ENCODE measurements at regions of chr14 and their contacts with region 1.

Region 1: GRCh38 chr14:94411638-94412037 is 23.2 kb upstream of the SERPINA1 start:
- DNase-seq: no peak
- H3K4me3 ChIP-seq: no peak overlapping the region
- H3K4me3 Mint-ChIP-seq: no peak overlapping the region
- H3K27ac Mint-ChIP-seq: no peak overlapping the region
- H3K4me1 ChIP-seq: peaks cover 9% of the 10 kb centered on the region; the same call in 1 of the 2 replicates
- H3K4me1 Mint-ChIP-seq: peaks cover 12% of the 10 kb centered on the region
- H3K27me3 ChIP-seq: no peaks in the 10 kb centered on the region
- H3K27me3 Mint-ChIP-seq: no peaks in the 10 kb centered on the region
- CTCF ChIP-seq: no peak

Region 2: DNA sequence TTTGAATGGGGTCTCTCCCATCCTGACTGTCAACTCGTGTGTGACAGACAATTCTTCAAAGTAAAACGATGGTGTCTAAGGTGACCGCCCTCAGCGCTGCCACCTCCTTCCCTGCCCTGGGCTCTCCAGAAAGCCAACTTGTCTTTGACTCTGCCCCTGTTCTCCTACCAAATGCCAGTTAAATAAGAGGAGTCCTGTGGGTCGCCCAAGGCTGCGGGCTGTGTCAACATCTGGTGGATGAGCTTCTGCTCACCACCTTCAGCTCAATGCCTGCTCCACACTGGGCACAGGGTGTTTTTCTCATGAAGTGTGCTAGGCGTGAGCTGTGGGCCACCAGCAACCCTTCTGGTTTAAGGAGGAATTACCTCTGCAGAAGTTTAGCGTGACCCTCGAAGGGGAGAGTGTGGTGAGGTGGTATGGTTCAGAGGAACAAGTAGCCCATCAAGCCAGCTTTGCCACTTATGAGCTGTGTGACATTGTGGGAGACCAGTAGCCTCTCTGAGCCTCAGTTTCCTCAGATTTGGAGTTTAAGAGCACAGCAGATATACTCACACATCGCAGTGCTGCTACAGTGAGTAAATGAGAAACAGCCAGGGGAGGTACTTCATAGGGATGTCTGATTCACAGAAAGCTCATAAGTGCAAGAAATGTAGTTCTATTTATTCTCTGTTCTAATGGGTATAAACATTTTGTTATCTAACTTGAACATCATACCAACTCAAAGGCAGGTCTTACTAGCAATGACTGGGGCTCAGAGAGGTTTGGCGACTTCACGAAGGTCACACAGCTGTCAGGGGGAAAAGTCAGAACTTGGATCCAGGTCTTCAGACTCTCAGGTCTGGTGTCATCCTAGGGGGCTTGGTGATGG is 35.3 kb before region 1 on chr14:
- CTCF ChIA-PET with region 1: interaction called, 3 read pairs
- POLR2A ChIA-PET with region 1: no interaction called
- intact Hi-C with region 1: loop called (anchors 2 kb)
- DNase-seq: no peak
- H3K4me3 ChIP-seq: no peak overlapping the region
- H3K4me3 Mint-ChIP-seq: no peak overlapping the region
- H3K27ac Mint-ChIP-seq: no peak overlapping the region
- H3K4me1 ChIP-seq: no peaks in the 10 kb centered on the region
- H3K4me1 Mint-ChIP-seq: peaks cover 6% of the 10 kb centered on the region
- H3K27me3 ChIP-seq: no peaks in the 10 kb centered on the region
- H3K27me3 Mint-ChIP-seq: no peaks in the 10 kb centered on the region
- CTCF ChIP-seq: no peak

Region 3: GRCh38 chr14:94439453-94440057 is 27.9 kb after region 1 on chr14:
- CTCF ChIA-PET with region 1: no interaction called
- POLR2A ChIA-PET with region 1: no interaction called
- intact Hi-C with region 1: no loop called
- DNase-seq: no peak
- H3K4me3 ChIP-seq: no peak overlapping the region
- H3K4me3 Mint-ChIP-seq: no peak overlapping the region
- H3K27ac Mint-ChIP-seq: no peak overlapping the region
- H3K4me1 ChIP-seq: no peaks in the 10 kb centered on the region
- H3K4me1 Mint-ChIP-seq: no peaks in the 10 kb centered on the region
- H3K27me3 ChIP-seq: no peaks in the 10 kb centered on the region
- H3K27me3 Mint-ChIP-seq: peaks cover 3% of the 10 kb centered on the region
- CTCF ChIP-seq: no peak

Region 4: DNA sequence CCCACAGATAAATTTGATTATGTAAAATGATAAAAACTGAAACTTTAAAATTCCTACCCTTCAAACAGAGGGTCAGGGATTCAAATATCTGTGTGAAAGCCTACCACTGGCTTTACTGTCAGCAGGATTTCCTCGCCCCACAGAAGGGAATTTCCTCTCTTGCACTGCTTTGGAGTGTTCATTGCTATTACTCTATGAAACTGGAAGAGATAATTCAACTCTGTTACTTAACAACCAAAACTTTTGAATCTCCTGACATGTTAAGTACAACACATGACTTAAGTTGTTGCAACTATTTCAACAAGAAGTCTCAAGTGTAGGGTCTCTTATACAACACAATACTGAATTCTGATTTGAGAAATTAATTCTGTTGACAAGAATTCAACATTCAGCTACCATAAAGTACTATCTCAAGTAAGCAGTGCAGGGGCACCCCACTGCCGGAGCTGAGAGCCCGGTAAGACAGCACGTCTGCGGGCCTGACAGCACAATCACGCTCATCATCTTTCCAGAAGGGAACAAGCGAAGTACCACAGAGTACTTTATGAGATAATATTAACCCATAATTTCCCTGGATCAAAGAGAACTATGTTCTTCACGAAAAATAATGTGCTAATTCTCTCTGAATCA is 722.8 kb after region 1 on chr14:
- CTCF ChIA-PET with region 1: no interaction called
- POLR2A ChIA-PET with region 1: no interaction called
- intact Hi-C with region 1: no loop called
- DNase-seq: no peak
- H3K4me3 ChIP-seq: no peak overlapping the region
- H3K4me3 Mint-ChIP-seq: no peak overlapping the region
- H3K27ac Mint-ChIP-seq: no peak overlapping the region
- H3K4me1 ChIP-seq: no peaks in the 10 kb centered on the region
- H3K4me1 Mint-ChIP-seq: no peaks in the 10 kb centered on the region
- H3K27me3 ChIP-seq: no peaks in the 10 kb centered on the region
- H3K27me3 Mint-ChIP-seq: no peaks in the 10 kb centered on the region
- CTCF ChIP-seq: no peak